GM10248 (cell line): ENCODE measurements at regions of chr14 and their contacts with region 1.

Region 1: DNA sequence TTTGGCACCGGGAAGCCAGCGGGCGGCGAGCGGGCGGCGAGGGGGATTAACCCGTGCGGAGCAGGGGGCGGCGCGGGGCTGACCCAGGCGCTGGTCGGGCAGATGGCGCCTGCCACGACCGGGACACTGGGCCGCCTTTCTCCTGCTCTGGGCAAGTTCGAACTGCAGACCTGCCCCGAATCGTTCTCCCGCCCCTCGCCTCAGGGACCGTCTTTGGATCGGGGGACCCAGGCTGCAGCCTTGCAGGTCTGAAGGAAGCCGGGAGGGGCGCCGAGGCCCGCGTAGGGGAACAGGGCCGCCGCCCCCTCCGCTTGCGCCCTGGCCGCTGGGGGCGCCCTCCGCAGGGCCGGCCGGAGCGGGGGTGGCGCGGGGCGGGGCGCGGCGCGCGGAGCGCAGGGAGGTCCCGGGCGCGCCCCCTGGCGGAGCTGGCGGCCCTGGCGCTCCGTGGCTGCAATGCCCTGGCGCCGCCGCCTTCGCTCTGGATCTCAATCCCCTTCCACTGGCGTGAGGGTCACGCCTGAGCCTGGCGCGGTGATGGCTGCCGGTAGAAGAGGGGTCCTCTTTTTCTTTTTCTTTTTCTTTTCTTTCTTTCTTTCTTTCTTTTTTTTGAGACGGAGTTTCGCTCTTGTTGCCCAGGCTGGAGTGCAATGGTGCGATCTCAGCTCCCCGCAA is 449 bp upstream of the LTBP2 start:
- DNase-seq: peak; percentile 87
- CTCF ChIP-seq: peak; percentile 83

Region 2: GRCh38 chr14:74349757-74350156 is 262.7 kb before region 1 on chr14:
- CTCF ChIA-PET with region 1: no interaction called
- POLR2A ChIA-PET with region 1: no interaction called
- DNase-seq: no peak
- CTCF ChIP-seq: no peak

Region 3: GRCh38 chr14:74595006-74595735 is 17.3 kb before region 1 on chr14:
- CTCF ChIA-PET with region 1: interaction called, 96 read pairs
- POLR2A ChIA-PET with region 1: no interaction called
- DNase-seq: no peak
- CTCF ChIP-seq: no peak

Region 4: GRCh38 chr14:74627076-74627475 is 14.6 kb after region 1 on chr14:
- CTCF ChIA-PET with region 1: interaction called, 62 read pairs
- POLR2A ChIA-PET with region 1: no interaction called
- DNase-seq: no peak
- CTCF ChIP-seq: no peak

Region 5: GRCh38 chr14:74641601-74642391 is 29.3 kb after region 1 on chr14:
- CTCF ChIA-PET with region 1: interaction called, 11 read pairs
- POLR2A ChIA-PET with region 1: no interaction called
- DNase-seq: no peak
- CTCF ChIP-seq: no peak

Region 6: GRCh38 chr14:74804219-74804826 is 191.8 kb after region 1 on chr14:
- CTCF ChIA-PET with region 1: interaction called, 41 read pairs
- POLR2A ChIA-PET with region 1: no interaction called
- DNase-seq: peak; percentile 36
- CTCF ChIP-seq: peak; percentile 58